ENCODE measurements at regions of chr19 and their contacts with region 1.

Region 1: DNA sequence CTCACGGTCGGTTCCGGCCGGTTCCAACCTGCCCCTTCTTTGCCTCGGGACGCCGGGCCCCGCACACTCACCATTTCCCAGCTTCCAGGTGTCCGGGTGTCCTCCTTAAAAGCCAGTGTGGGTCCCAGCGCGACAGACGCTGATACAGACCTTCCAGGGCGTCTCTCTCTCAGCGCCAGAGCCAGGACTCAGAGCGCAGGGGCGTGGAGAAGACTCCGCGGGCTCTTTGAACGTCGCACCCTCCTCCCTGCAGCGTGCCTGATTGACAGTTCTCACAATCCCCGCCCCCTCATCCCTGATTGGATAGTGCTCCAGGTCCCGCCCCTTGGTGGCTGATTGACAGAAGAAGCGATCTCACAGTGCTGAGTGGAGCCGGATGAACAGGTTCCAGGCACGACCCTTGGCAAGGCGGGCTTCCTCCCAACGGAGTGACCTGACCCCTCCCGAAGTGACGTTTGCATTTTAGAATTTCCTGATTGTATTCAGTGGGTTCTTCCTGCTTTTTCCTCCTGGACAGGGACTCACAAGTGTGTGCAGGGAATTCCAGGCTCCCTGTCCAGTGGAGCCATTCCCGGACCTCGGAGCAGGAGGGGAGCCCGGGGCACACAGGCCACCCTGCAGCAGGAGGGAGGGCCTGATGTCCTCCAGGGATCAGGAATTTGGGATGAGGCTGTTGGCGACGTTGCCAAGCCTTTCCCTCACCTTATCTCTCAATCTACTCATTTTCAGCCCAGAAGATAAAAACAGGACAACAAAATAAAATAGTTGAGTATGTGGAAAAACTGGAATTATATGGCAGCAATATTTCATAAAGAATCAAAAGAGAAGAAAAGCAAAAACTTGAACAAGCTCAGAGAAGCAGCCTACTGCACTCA is at the start of gene ZNF823:
- DNase-seq: peak; percentile 97 to 99
- ATAC-seq: peak; percentile 100
- H3K4me3 ChIP-seq: peak within 1 kb of the TSS; percentile 97
- H3K27ac ChIP-seq: peak within 1 kb of the TSS; percentile 83
- H3K4me1 ChIP-seq: peaks cover 6% of the 10 kb centered on the region
- H3K27me3 ChIP-seq: no peaks in the 10 kb centered on the region
- CTCF ChIP-seq: no peak
- total RNA-seq, gene ZNF823: 1.5 to 4.3 (median 2.2) TPM

Region 2: GRCh38 chr19:11766597-11767591 is 27.9 kb after region 1 on chr19 and contains the start of gene ZNF441:
- intact Hi-C with region 1: loop called in 1 of 2 experiments (anchors 2 kb)
- DNase-seq: peak; percentile 97 to 98
- ATAC-seq: peak; percentile 99 to 100 (median 99)
- H3K4me3 ChIP-seq: peak within 1 kb of the TSS; percentile 86
- H3K27ac ChIP-seq: peak within 1 kb of the TSS; percentile 95
- H3K4me1 ChIP-seq: peaks cover 5% of the 10 kb centered on the region
- H3K27me3 ChIP-seq: no peaks in the 10 kb centered on the region
- CTCF ChIP-seq: no peak
- total RNA-seq, gene ZNF441: 1.8 to 4.7 (median 2.3) TPM